Left ventricle myocardium inferior (tissue), 1 donor: ENCODE measurements at regions of chr15 and their contacts with region 1.

Region 1: DNA sequence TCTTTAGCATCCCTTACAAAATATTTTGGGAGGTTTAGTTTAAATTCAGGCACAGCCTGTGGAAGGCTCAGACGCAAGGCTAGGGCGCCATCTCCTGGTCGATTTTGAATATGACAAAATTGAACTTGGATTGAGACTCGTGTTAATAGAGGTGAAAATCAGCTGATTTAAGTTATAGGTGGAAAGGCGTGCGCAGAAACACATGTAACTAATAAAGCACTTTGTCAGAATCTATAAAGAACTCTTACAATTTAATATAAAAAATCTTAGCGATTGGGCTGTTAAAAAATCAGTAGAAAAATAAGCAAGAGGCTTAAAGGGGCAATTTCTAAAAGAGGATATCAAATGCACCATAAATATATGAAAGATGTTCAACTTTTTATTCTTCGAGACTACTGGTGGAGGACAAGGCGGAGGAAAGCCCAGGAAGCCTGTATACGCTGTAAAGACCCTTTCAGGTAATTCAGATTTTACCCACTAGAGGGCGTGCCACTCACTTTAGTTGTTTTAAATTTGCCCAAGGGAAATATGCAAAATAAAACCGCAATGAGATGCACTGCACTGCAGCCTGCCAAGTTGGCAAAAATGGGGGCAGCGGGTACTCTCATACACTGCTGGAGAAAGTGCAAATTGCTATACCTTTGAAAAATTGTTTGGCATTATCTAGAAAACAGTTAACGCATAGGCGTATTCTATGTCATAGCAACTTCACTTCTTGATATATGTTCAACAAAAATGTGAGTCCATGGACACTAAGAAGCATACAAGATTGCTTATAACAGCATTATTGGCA is 64.7 kb downstream of the SLC30A4 start:
- DNase-seq: no peak
- H3K4me3 ChIP-seq: peak overlapping the region; percentile 68
- H3K27ac ChIP-seq: peak overlapping the region; percentile 84
- H3K4me1 ChIP-seq: peaks cover 4% of the 10 kb centered on the region
- H3K27me3 ChIP-seq: no peaks in the 10 kb centered on the region
- CTCF ChIP-seq: peak; percentile 80

Region 2: GRCh38 chr15:45064386-45064785 is 393.5 kb before region 1 on chr15:
- intact Hi-C with region 1: no loop called
- DNase-seq: no peak
- H3K4me3 ChIP-seq: no peak overlapping the region
- H3K27ac ChIP-seq: no peak overlapping the region
- H3K4me1 ChIP-seq: no peaks in the 10 kb centered on the region
- H3K27me3 ChIP-seq: no peaks in the 10 kb centered on the region
- CTCF ChIP-seq: no peak

Region 3: GRCh38 chr15:45225506-45226273 is 232.1 kb before region 1 on chr15:
- intact Hi-C with region 1: no loop called
- DNase-seq: no peak
- H3K4me3 ChIP-seq: no peak overlapping the region
- H3K27ac ChIP-seq: no peak overlapping the region
- H3K4me1 ChIP-seq: peaks cover 4% of the 10 kb centered on the region
- H3K27me3 ChIP-seq: peaks cover 10% of the 10 kb centered on the region
- CTCF ChIP-seq: no peak

Region 4: DNA sequence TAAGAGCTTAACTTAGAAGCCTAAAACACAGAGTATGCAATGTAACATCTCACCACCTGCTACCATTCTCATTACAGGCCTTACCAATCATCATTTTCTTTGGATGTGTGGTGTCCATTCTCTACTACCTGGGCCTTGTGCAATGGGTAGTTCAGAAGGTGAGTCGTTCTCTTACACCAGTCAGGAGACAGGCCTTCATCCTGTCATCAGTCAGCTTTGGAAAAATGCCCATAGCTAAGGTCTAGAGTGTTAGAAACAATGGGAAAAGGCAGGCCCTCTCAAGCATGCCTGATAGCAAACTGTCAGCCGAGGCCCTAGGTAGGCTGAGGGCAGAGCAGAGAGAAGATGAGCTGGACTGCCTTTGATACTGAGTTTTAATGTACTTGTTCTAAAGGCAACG is 192.3 kb before region 1 on chr15:
- intact Hi-C with region 1: no loop called
- DNase-seq: no peak
- H3K4me3 ChIP-seq: no peak overlapping the region
- H3K27ac ChIP-seq: no peak overlapping the region
- H3K4me1 ChIP-seq: no peaks in the 10 kb centered on the region
- H3K27me3 ChIP-seq: no peaks in the 10 kb centered on the region
- CTCF ChIP-seq: no peak

Region 5: GRCh38 chr15:45429974-45430792 is 27.7 kb before region 1 on chr15:
- intact Hi-C with region 1: loop called (anchors 2 kb)
- DNase-seq: peak; percentile 57
- H3K4me3 ChIP-seq: peak overlapping the region; percentile 58
- H3K27ac ChIP-seq: no peak overlapping the region
- H3K4me1 ChIP-seq: peaks cover 7% of the 10 kb centered on the region
- H3K27me3 ChIP-seq: peaks cover 9% of the 10 kb centered on the region
- CTCF ChIP-seq: peak; percentile 96